H1 (cell line): ENCODE measurements at regions of chr15 and their contacts with region 1.

Region 1: GRCh38 chr15:101133751-101134261 is 118.0 kb downstream of the CHSY1 start:
- DNase-seq: no peak
- H3K4me3 ChIP-seq: no peak overlapping the region
- H3K27ac ChIP-seq: no peak overlapping the region
- H3K4me1 ChIP-seq: no peaks in the 10 kb centered on the region; a peak in 1 of 7 replicates
- H3K27me3 ChIP-seq: no peaks in the 10 kb centered on the region; a peak in 1 of 7 replicates
- CTCF ChIP-seq: no peak
- EP300 ChIP-seq: no peak
- POLR2A ChIP-seq: no peak
- RAD21 ChIP-seq: no peak; a peak in 1 of 4 replicates

Region 2: GRCh38 chr15:101145362-101145761 is 11.6 kb after region 1 on chr15:
- CTCF ChIA-PET with region 1: interaction called, 128 read pairs
- POLR2A ChIA-PET with region 1: interaction called, 5 read pairs
- DNase-seq: no peak
- H3K4me3 ChIP-seq: no peak overlapping the region
- H3K27ac ChIP-seq: no peak overlapping the region
- H3K4me1 ChIP-seq: no peaks in the 10 kb centered on the region; a peak in 1 of 7 replicates
- H3K27me3 ChIP-seq: no peaks in the 10 kb centered on the region; a peak in 2 of 7 replicates
- CTCF ChIP-seq: no peak
- EP300 ChIP-seq: no peak
- POLR2A ChIP-seq: no peak
- RAD21 ChIP-seq: no peak